ENCODE measurements at regions of chr6 and their contacts with region 1.

Region 1: DNA sequence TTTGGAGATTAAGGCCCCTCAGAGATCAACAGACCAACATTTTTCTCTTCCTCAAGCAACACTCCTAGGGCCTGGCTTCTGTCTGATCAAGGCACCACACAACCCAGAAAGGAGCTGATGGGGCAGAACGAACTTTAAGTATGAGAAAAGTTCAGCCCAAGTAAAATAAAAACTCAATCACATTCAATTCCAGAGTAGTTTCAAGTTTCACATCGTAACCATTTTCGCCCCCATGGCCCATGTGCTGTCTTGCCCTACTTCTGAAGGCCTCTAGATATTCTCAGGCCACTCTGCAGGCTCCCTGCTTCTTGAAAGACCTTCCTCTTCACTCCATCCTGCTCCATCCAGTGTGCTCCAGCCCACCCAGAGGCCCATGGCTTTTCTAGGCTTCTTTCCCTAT is 4.2 kb downstream of the IL17A start:
- DNase-seq: no peak
- H3K4me3 ChIP-seq: no peak overlapping the region
- H3K27ac ChIP-seq: no peak overlapping the region
- H3K4me1 ChIP-seq: no peaks in the 10 kb centered on the region
- H3K27me3 ChIP-seq: no peaks in the 10 kb centered on the region
- CTCF ChIP-seq: no peak
- POLR2A ChIP-seq: no peak

Region 2: DNA sequence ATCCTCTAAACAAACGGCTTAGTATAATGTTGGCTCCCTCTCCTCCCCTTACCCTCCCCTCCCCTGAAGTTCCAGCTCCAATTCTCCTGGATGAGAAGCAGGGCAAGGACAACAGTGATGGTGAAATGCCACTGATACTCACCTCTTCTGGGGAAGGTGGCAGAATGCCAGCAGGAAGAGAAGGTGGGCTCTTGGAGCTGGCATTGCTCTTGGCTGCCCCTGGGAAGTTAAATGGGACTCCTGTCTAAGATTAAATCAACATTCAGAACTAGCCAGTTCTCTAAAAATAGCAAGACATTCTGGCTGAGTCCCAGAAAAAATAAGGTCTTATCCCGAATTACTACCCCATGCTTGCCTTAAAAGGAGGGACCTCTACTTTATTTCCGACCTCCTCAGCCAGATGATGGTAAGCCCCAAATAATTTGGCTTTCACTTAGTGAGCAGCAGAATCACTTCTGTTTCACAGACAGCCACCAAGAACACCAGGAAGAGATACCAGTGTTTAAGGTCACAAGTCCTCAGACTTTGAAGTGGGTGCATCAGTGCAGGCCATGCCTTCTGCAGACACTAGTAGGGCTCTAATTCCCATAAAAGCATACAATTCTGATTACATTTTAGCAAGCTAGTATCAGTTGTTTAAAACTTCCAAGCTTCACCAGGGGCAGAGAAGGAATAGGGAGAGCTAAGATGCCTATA is 50.3 kb before region 1 on chr6:
- CTCF ChIA-PET with region 1: no interaction called
- POLR2A ChIA-PET with region 1: no interaction called
- dilution Hi-C with region 1: no loop called
- intact Hi-C with region 1: loop called (anchors 10 kb)
- DNase-seq: no peak
- H3K4me3 ChIP-seq: no peak overlapping the region
- H3K27ac ChIP-seq: no peak overlapping the region
- H3K4me1 ChIP-seq: no peaks in the 10 kb centered on the region
- H3K27me3 ChIP-seq: peaks cover 7 to 8% of the 10 kb centered on the region in 2 experiments
- CTCF ChIP-seq: no peak
- POLR2A ChIP-seq: no peak

Measured in endothelial cell of umbilical vein (primary cell).